BJ (cell line): ENCODE measurements at regions of chr3 and their contacts with region 1.

Region 1: DNA sequence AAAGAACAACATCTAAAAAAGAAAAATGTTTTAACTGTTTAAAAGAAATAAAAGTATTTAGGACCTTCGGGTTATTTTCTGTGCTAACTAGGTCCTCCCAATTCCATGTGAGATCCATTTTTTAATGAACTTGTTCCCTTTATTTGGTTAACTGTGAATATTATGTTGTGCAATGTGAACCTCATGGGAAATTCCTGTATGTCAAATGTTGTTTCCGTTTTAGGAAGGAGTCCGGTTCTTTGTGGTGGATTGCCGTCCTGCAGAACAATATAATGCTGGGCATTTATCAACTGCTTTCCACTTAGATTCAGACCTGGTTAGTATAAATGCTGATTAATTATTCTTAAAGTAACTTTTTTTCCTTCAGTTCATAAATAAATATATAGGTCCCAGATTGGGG is 35.5 kb upstream of the NIT2 start:
- DNase-seq: no peak
- H3K4me3 ChIP-seq: no peak overlapping the region
- H3K27me3 ChIP-seq: no peaks in the 10 kb centered on the region
- CTCF ChIP-seq: no peak

Region 2: DNA sequence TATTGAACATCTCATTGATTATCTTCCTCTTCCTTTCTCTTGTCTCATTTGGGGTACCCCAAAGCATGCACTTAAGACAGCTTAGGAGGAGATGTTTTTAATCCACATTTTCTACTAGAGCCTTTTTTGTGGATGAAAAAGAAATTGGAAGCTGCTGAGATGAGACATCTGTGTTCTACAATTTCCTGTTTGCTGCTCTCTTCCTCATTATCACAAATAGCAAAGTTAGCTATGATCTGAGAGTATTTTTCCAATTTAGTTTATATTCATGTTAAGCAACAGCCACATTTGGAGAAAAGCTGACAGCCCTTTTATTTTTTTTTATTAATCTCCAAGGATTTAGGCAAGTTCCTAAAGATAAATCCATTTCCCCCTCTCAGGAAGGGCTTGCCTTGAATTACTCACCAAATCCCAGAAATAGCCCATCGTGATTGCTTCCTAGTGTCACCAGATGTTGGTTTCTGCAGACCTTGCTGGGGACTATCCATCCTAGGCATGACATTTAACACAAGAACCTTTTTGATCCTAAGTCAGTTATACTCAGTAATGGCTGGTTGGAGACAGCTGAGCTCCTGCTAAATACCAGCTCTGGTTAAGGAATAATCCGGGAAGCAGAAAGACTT is 114.0 kb before region 1 on chr3:
- CTCF ChIA-PET with region 1: no interaction called
- POLR2A ChIA-PET with region 1: no interaction called
- DNase-seq: no peak
- H3K4me3 ChIP-seq: no peak overlapping the region
- H3K27me3 ChIP-seq: no peaks in the 10 kb centered on the region
- CTCF ChIP-seq: no peak

Region 3: GRCh38 chr3:100316641-100317069 is 17.6 kb after region 1 on chr3:
- CTCF ChIA-PET with region 1: interaction called, 10 read pairs
- POLR2A ChIA-PET with region 1: no interaction called
- DNase-seq: peak; percentile 17
- H3K4me3 ChIP-seq: no peak overlapping the region
- H3K27me3 ChIP-seq: no peaks in the 10 kb centered on the region
- CTCF ChIP-seq: peak; percentile 70